GM13976 (cell line): ENCODE measurements at regions of chr6 and their contacts with region 1.

Region 1: DNA sequence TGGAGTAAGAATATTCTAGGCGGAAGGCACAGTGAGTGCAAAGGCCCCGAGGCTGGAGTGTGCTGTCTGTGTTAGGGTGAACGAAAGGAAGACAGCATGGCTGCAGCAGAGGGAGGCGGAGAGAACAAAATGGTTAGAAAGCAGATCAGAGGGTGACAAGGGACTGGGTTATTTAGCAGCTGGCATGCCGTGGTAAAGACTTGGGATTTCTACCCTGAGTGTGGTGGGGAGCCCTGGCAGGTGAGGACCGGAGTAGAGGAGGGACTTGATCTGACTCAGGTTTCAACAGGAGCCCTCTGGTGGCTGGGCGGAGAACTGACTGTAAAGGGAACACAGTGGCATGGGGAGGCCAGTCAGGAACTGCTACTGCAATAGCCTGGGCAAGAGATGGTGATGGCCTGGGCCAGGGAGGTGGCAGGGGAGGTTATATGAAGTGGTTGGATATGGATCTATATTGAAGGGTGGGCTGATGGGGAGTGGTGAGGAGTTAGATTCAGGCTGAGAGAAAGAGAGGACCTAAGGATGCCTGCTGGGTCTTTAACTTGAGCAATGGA is 38.0 kb downstream of the PIM1 start:
- DNase-seq: peak; percentile 76
- CTCF ChIP-seq: peak; percentile 65

Region 2: GRCh38 chr6:36874443-36875249 is 333.3 kb before region 1 on chr6 and contains the start of gene PPIL1:
- in situ Hi-C with region 1: loop called (anchors 10 kb)
- DNase-seq: peak; percentile 91
- CTCF ChIP-seq: no peak

Region 3: GRCh38 chr6:37029249-37029971 is 178.6 kb before region 1 on chr6:
- in situ Hi-C with region 1: loop called (anchors 10 kb)
- DNase-seq: peak; percentile 79
- CTCF ChIP-seq: peak; percentile 73

Region 4: GRCh38 chr6:37244430-37245310 is 36.7 kb after region 1 on chr6:
- in situ Hi-C with region 1: no loop called
- DNase-seq: no peak
- CTCF ChIP-seq: no peak